ENCODE measurements at regions of chr18 and their contacts with region 1.

Region 1: GRCh38 chr18:2636126-2636631 is 19.3 kb upstream of the SMCHD1 start:
- DNase-seq: no peak
- ATAC-seq: peak; percentile 35
- H3K4me3 Mint-ChIP-seq: peak overlapping the region; percentile 79
- H3K27ac Mint-ChIP-seq: peak overlapping the region; percentile 94
- H3K4me1 Mint-ChIP-seq: peaks cover 51% of the 10 kb centered on the region
- H3K27me3 Mint-ChIP-seq: no peaks in the 10 kb centered on the region

Region 2: GRCh38 chr18:2312440-2312839 is 323.7 kb before region 1 on chr18:
- POLR2A ChIA-PET with region 1: no interaction called
- DNase-seq: no peak
- ATAC-seq: no peak
- H3K4me3 Mint-ChIP-seq: no peak overlapping the region
- H3K27ac Mint-ChIP-seq: no peak overlapping the region
- H3K4me1 Mint-ChIP-seq: no peaks in the 10 kb centered on the region
- H3K27me3 Mint-ChIP-seq: peaks cover 10% of the 10 kb centered on the region

Region 3: GRCh38 chr18:2571200-2572143 is 64.7 kb before region 1 on chr18 and contains the starts of genes METTL4 and NDC80:
- POLR2A ChIA-PET with region 1: interaction called, 20 read pairs
- DNase-seq: peak; percentile 90
- ATAC-seq: peak; percentile 79
- H3K4me3 Mint-ChIP-seq: peak within 1 kb of the TSS; percentile 100
- H3K27ac Mint-ChIP-seq: peak within 1 kb of the TSS; percentile 98
- H3K4me1 Mint-ChIP-seq: peaks cover 39% of the 10 kb centered on the region
- H3K27me3 Mint-ChIP-seq: no peaks in the 10 kb centered on the region
- total RNA-seq, gene METTL4: 22.7 to 25.8 TPM
- total RNA-seq, gene NDC80: 66.0 to 67.0 TPM

Region 4: GRCh38 chr18:2589345-2590068 is 46.7 kb before region 1 on chr18:
- POLR2A ChIA-PET with region 1: interaction called, 32 read pairs
- DNase-seq: no peak
- ATAC-seq: peak; percentile 83
- H3K4me3 Mint-ChIP-seq: peak overlapping the region; percentile 83
- H3K27ac Mint-ChIP-seq: peak overlapping the region; percentile 98
- H3K4me1 Mint-ChIP-seq: peaks cover 40% of the 10 kb centered on the region
- H3K27me3 Mint-ChIP-seq: no peaks in the 10 kb centered on the region

Region 5: DNA sequence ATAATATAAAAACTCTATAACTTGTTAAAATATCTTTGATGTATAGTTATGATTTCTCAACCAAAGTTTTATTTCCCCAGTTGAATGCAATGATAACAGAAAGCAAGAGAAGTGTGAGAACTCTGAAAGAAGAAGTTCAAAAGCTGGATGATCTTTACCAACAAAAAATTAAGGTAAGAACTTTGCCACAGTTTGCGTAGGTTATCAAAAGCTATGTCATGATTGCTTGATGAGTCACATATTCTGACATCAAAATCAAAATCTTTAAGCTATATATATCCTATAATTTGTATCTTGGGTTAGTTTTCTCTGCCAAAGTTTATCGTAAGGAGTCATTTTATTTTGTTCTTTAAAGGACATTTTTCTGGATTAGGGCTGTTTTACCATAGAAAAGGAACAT is 29.8 kb before region 1 on chr18:
- POLR2A ChIA-PET with region 1: interaction called, 32 read pairs
- DNase-seq: no peak
- ATAC-seq: no peak
- H3K4me3 Mint-ChIP-seq: peak overlapping the region; percentile 66
- H3K27ac Mint-ChIP-seq: peak overlapping the region; percentile 83
- H3K4me1 Mint-ChIP-seq: peaks cover 28% of the 10 kb centered on the region
- H3K27me3 Mint-ChIP-seq: no peaks in the 10 kb centered on the region